Mammary epithelial cell (primary cell): ENCODE measurements at regions of chr7 and their contacts with region 1.

Region 1: GRCh38 chr7:1512781-1513656 is 8.8 kb upstream of the INTS1 start:
- DNase-seq: peak; percentile 90
- H3K4me3 ChIP-seq: peak overlapping the region in 1 of 3 experiments; percentile 16
- H3K27ac ChIP-seq: no peak overlapping the region
- H3K4me1 ChIP-seq: peaks cover 14% of the 10 kb centered on the region
- H3K27me3 ChIP-seq: no peaks in the 10 kb centered on the region
- CTCF ChIP-seq: no peak

Region 2: DNA sequence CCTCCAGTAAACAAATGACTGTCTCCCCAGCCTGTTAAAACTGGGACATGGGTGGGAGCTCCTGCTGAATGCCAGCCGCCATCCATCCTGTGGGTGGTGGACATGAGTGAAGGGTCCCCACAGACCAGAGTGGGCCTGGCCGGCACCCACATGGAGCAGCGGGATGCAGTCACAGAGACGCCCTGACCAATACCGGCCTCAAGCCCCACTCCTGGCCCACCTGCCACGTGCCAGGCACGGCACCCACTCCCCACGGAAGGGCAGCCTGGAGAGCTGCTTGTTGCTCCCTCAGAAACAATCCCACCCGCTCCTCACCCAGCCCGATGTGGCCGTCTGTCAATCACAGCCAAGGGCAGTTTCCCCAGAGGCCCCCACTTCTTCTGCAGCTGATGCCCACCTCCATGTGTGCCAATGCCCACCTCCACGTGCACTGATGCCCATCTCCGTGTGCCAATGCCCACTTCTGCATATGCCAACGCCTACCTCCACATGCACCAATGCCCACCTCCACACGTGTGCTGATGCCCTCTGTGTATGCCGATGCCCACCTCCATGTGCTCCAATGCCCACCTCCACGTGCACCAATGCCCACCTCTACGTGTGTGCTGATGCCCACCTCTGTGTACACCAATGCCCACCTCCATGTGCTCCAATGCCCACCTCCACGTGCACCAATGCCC is 829.4 kb before region 1 on chr7:
- CTCF ChIA-PET with region 1: no interaction called
- dilution Hi-C with region 1: no loop called
- in situ Hi-C with region 1: no loop called
- intact Hi-C with region 1: no loop called
- DNase-seq: no peak
- H3K4me3 ChIP-seq: no peak overlapping the region
- H3K27ac ChIP-seq: no peak overlapping the region
- H3K4me1 ChIP-seq: no peaks in the 10 kb centered on the region
- H3K27me3 ChIP-seq: no peaks in the 10 kb centered on the region
- CTCF ChIP-seq: no peak

Region 3: DNA sequence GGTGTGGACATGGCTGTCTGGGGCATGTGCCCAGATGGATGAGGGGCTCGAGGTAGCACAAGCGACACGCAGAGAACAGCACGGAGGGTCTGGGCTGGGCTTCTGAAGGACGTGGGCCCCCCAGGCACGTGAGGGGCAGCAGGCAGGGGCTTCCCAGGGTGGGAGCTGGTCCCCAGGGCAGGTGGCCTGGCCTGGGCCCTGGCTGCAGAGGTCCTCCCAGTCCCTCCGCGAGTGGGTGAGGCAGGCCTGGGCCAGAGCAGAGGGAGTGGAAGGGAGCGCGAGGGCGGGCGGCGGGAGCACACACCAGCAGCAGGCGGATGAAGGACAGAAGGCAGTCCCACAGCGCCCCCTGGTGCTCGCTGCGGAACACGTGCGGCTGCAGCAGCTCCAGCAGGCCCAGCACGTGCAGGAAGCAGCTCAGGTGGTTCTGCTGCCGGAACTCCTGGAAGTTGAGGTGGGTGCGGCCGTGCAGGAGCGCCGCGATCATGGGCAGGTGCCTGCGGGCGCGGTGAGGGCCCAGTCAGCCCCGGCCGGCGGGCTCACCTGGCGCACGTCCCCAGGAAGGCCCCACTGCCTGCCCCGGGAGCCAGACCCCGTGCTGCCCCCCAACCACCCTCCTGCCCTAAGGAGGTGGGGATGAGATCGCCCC is 39.0 kb before region 1 on chr7:
- CTCF ChIA-PET with region 1: no interaction called
- dilution Hi-C with region 1: no loop called
- in situ Hi-C with region 1: no loop called
- intact Hi-C with region 1: no loop called
- DNase-seq: peak; percentile 79
- H3K4me3 ChIP-seq: no peak overlapping the region
- H3K27ac ChIP-seq: no peak overlapping the region
- H3K4me1 ChIP-seq: peaks cover 8% of the 10 kb centered on the region
- H3K27me3 ChIP-seq: no peaks in the 10 kb centered on the region
- CTCF ChIP-seq: peak; percentile 73 to 92

Region 4: DNA sequence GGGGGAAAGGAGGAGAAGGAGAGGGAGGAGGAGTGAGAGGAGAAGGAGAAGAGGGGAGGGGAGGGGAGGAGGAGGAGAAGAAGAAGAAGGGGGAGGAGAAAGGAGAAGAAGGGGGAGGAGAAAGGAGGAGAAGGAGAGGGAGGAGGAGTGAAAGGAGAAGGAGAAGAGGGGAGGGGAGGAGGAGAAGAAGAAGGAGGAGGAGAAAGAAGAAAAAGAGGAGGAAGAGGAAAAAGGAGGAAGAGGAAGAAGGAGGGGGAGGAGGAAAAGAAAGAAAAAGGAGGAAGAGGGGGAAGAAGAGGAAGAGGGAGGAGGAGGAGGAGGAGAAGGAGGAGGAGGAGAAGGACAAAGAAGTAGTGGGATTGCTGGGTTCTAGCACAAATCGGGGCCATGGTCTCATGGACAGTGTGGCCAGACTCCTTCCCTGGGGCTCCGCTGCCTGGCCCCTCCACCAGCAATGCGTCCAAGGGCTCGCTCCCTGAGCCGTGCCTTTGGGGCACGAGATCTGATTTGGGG is 13.3 kb after region 1 on chr7:
- CTCF ChIA-PET with region 1: no interaction called
- dilution Hi-C with region 1: no loop called
- in situ Hi-C with region 1: no loop called
- intact Hi-C with region 1: loop called (anchors 2 kb)
- DNase-seq: no peak
- H3K4me3 ChIP-seq: peak overlapping the region in 1 of 3 experiments; percentile 30
- H3K27ac ChIP-seq: no peak overlapping the region
- H3K4me1 ChIP-seq: peaks cover 13% of the 10 kb centered on the region
- H3K27me3 ChIP-seq: no peaks in the 10 kb centered on the region
- CTCF ChIP-seq: no peak

Region 5: GRCh38 chr7:1725199-1725690 is 212.2 kb after region 1 on chr7:
- CTCF ChIA-PET with region 1: no interaction called
- dilution Hi-C with region 1: no loop called
- in situ Hi-C with region 1: no loop called
- intact Hi-C with region 1: no loop called
- DNase-seq: peak; percentile 36
- H3K4me3 ChIP-seq: no peak overlapping the region
- H3K27ac ChIP-seq: no peak overlapping the region
- H3K4me1 ChIP-seq: no peaks in the 10 kb centered on the region
- H3K27me3 ChIP-seq: peaks cover 5% of the 10 kb centered on the region
- CTCF ChIP-seq: no peak